ENCODE measurements at regions of chr11 and their contacts with region 1.

Region 1: GRCh38 chr11:82900277-82901164 is at the start of gene PRCP:
- DNase-seq: peak; percentile 90 to 98 (median 94)
- H3K4me3 ChIP-seq: peak within 1 kb of the TSS; percentile 67 to 82
- H3K4me3 Mint-ChIP-seq: peak within 1 kb of the TSS; percentile 95 to 100 (median 98)
- H3K27ac ChIP-seq: peak within 1 kb of the TSS; percentile 92
- H3K27ac Mint-ChIP-seq: peak within 1 kb of the TSS; percentile 95 to 100 (median 100)
- H3K4me1 ChIP-seq: peaks cover 29% of the 10 kb centered on the region
- H3K4me1 Mint-ChIP-seq: peaks cover 14 to 40% (median 34%) of the 10 kb centered on the region in 4 donors
- H3K27me3 ChIP-seq: no peaks in the 10 kb centered on the region
- H3K27me3 Mint-ChIP-seq: no peaks in the 10 kb centered on the region
- total RNA-seq, gene PRCP: 24.1 to 28.0 TPM

Region 2: DNA sequence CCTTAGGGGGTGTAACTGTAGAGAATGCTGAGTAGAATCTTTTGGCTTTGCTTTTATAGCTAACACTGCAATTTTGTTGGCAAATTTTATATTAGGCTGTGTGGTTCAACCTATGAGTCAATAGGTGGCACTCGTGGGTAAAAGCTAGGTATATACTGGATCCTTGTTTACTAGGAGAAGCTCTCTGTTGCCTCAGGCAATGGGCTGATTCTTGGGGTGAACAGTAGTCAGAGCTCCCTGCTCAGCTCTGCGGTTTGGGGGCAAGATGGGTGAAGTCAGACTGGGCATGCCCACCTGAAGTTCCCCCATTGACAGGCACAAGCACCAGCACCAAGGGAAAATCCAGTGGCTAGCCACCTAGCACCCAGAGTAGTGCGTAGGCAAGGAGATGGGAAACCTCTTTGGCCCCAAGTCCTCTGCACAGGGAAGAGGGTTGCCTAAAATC is 405.5 kb before region 1 on chr11:
- CTCF ChIA-PET with region 1: no interaction called
- POLR2A ChIA-PET with region 1: no interaction called
- intact Hi-C with region 1: no loop called
- DNase-seq: no peak
- H3K4me3 ChIP-seq: no peak overlapping the region
- H3K4me3 Mint-ChIP-seq: no peak overlapping the region
- H3K27ac ChIP-seq: no peak overlapping the region
- H3K27ac Mint-ChIP-seq: no peak overlapping the region
- H3K4me1 ChIP-seq: no peaks in the 10 kb centered on the region
- H3K4me1 Mint-ChIP-seq: no peaks in the 10 kb centered on the region
- H3K27me3 ChIP-seq: no peaks in the 10 kb centered on the region
- H3K27me3 Mint-ChIP-seq: no peaks in the 10 kb centered on the region

Region 3: DNA sequence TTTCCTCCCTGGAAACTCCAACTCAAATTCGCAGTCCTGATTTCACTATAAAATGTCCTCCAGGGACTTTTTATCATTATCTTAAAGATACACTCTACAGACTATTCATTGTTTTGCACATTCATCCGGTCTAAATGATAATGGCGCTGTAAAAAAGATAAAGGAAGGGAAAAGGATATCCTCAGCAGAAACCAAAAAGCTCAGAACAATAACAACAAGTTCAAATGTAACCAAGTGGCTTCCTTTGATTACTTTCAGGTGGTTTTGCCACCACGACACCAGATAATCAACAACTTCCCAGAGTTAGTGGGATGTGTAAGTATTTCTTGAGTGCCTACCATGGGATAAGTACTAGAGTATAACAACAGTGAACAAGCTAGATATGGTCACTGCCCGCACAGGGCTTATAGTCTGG is 26.6 kb before region 1 on chr11:
- CTCF ChIA-PET with region 1: interaction called, 107 read pairs
- POLR2A ChIA-PET with region 1: interaction called, 21 read pairs
- intact Hi-C with region 1: loop called (anchors 2 kb)
- DNase-seq: peak in 4 of 5 donors; percentile 28 to 51 (median 36)
- H3K4me3 ChIP-seq: no peak overlapping the region
- H3K4me3 Mint-ChIP-seq: peak overlapping the region in 6 of 8 donors; percentile 49 to 73 (median 62)
- H3K27ac ChIP-seq: no peak overlapping the region
- H3K27ac Mint-ChIP-seq: peak overlapping the region; percentile 33 to 85 (median 70)
- H3K4me1 ChIP-seq: peaks cover 24% of the 10 kb centered on the region
- H3K4me1 Mint-ChIP-seq: peaks cover 32 to 48% (median 35%) of the 10 kb centered on the region in 4 donors
- H3K27me3 ChIP-seq: no peaks in the 10 kb centered on the region
- H3K27me3 Mint-ChIP-seq: no peaks in the 10 kb centered on the region

Region 4: DNA sequence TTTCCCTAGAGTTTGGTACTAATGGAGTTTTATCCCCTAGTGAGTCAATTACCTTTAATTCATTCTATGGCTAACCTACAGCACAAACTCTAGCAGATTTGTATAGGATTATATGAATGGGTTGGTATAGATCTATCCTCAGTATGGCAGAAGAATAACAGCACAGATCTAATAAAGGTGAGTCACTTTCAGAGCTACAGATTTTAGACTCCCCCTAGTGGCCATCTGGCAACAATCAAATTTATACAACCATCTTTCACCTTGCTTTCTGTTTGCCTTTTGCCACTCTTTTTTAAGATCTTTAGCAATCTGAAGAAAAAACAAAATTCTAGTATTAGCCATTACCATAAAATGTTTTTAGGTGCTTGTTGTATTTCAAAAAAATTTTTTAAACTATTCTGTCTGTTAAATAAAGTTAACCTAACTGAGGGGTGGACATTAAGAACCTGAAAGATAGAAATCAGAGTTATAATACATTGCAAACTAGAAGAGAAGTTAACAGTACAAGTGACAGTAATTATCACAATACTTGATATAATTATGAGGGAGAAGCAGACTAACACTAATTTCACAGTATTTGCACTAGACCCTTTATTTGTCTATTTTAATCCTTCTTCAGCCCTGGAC is 26.8 kb after region 1 on chr11:
- CTCF ChIA-PET with region 1: interaction called, 11 read pairs
- POLR2A ChIA-PET with region 1: interaction called, 5 read pairs
- intact Hi-C with region 1: no loop called
- DNase-seq: peak; percentile 50 to 71 (median 65)
- H3K4me3 ChIP-seq: no peak overlapping the region
- H3K4me3 Mint-ChIP-seq: no peak overlapping the region
- H3K27ac ChIP-seq: no peak overlapping the region
- H3K27ac Mint-ChIP-seq: peak overlapping the region in 2 of 7 donors; percentile 2 to 57
- H3K4me1 ChIP-seq: peaks cover 8% of the 10 kb centered on the region
- H3K4me1 Mint-ChIP-seq: peaks cover 16 to 22% (median 18%) of the 10 kb centered on the region in 4 donors
- H3K27me3 ChIP-seq: no peaks in the 10 kb centered on the region
- H3K27me3 Mint-ChIP-seq: no peaks in the 10 kb centered on the region

Region 5: DNA sequence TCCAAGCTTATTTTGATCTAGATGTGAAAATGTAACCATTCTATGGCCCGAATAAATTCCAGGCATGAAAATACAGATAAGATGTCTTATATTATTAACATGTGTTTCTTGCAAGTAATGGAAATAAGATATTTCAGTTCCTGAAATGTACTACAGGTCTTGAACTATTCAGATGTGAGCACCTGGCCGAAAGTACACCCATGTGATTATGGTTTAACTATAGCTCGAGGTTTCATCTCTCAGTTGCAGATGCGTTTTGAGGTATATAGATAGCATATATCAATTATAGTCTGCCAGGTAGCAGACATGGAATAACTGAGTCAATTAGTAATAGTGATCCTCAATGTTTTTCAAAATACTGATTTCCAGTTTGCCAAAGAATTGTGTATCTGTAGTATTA is 69.3 kb after region 1 on chr11:
- CTCF ChIA-PET with region 1: interaction called, 4 read pairs
- POLR2A ChIA-PET with region 1: interaction called, 14 read pairs
- intact Hi-C with region 1: no loop called
- DNase-seq: no peak
- H3K4me3 ChIP-seq: no peak overlapping the region
- H3K4me3 Mint-ChIP-seq: peak overlapping the region in 2 of 8 donors; percentile 2 to 43
- H3K27ac ChIP-seq: no peak overlapping the region
- H3K27ac Mint-ChIP-seq: no peak overlapping the region
- H3K4me1 ChIP-seq: peaks cover 7% of the 10 kb centered on the region
- H3K4me1 Mint-ChIP-seq: peaks cover 18 to 39% (median 19%) of the 10 kb centered on the region in 4 donors
- H3K27me3 ChIP-seq: no peaks in the 10 kb centered on the region
- H3K27me3 Mint-ChIP-seq: no peaks in the 10 kb centered on the region

Region 6: GRCh38 chr11:82981852-82982251 is 81.3 kb after region 1 on chr11:
- CTCF ChIA-PET with region 1: no interaction called
- POLR2A ChIA-PET with region 1: no interaction called
- intact Hi-C with region 1: no loop called
- DNase-seq: no peak
- H3K4me3 ChIP-seq: no peak overlapping the region
- H3K4me3 Mint-ChIP-seq: no peak overlapping the region
- H3K27ac ChIP-seq: no peak overlapping the region
- H3K27ac Mint-ChIP-seq: no peak overlapping the region
- H3K4me1 ChIP-seq: no peaks in the 10 kb centered on the region
- H3K4me1 Mint-ChIP-seq: peaks cover 10 to 11% (median 11%) of the 10 kb centered on the region in 4 donors
- H3K27me3 ChIP-seq: no peaks in the 10 kb centered on the region
- H3K27me3 Mint-ChIP-seq: no peaks in the 10 kb centered on the region

Region 7: GRCh38 chr11:83071567-83072349 is 171.2 kb after region 1 on chr11 and contains the start of gene RAB30:
- CTCF ChIA-PET with region 1: no interaction called
- POLR2A ChIA-PET with region 1: interaction called, 24 read pairs
- intact Hi-C with region 1: loop called (anchors 1 kb)
- DNase-seq: peak; percentile 94 to 99 (median 96)
- H3K4me3 ChIP-seq: peak within 1 kb of the TSS; percentile 89 to 91
- H3K4me3 Mint-ChIP-seq: no peak within 1 kb of the TSS
- H3K27ac ChIP-seq: peak within 1 kb of the TSS; percentile 97
- H3K27ac Mint-ChIP-seq: no peak within 1 kb of the TSS
- H3K4me1 ChIP-seq: peaks cover 60% of the 10 kb centered on the region
- H3K4me1 Mint-ChIP-seq: peaks cover 6 to 39% (median 24%) of the 10 kb centered on the region in 4 donors
- H3K27me3 ChIP-seq: no peaks in the 10 kb centered on the region
- H3K27me3 Mint-ChIP-seq: no peaks in the 10 kb centered on the region
- total RNA-seq, gene RAB30: 12.3 to 14.1 TPM

Region 8: DNA sequence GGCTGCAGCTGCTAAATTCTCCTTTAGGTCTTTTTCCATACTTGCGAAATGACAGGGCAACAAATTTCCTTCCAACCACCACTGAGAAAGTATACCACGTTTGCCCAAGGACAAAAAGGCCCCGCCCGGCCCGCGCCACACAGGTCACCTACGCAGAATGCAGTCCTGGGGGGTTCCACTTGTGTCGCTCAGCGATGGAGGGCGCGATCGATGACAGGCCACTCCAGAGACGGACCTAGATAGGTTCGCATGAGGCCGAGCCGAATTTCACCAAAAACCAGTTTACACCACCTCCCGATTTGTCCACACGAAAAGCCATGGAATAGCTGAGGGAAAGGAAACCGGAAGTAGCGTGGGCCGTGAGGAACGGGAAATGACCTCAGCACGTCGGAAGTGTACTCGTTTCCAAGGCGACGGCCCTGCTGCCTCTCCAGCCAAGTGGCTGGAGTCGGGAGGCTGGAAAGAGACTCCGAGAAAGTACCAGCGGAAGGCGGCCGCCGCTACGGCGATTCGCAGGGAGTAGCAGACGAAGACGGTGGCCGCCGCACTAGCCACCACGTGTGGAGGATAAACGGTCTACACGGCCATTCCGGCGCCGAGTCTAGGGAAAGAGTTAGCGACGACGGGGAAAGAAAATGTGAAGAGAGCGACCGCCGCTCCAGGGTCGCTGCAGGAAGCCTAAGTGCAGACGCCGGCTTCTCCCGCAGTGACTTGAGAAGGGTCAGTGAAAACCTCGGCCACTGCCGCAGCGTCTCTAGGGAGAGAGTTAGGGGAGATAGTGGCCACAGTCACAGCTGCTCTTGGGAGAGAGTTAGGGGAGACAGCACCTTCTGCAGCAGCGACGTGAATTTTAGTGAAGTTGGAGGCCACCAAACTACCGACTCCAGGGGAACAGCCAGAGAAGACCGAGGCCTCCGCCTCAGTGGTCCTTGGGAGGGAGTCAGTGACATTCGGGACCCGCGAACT is 293.1 kb after region 1 on chr11 and contains the start of gene ANKRD42:
- CTCF ChIA-PET with region 1: interaction called, 3 read pairs
- POLR2A ChIA-PET with region 1: interaction called, 31 read pairs
- intact Hi-C with region 1: loop called (anchors 1 kb)
- DNase-seq: peak; percentile 88 to 92 (median 90)
- H3K4me3 ChIP-seq: peak within 1 kb of the TSS; percentile 90 to 99
- H3K4me3 Mint-ChIP-seq: peak within 1 kb of the TSS; percentile 98 to 100 (median 99)
- H3K27ac ChIP-seq: peak within 1 kb of the TSS; percentile 99
- H3K27ac Mint-ChIP-seq: peak within 1 kb of the TSS; percentile 99 to 100 (median 100)
- H3K4me1 ChIP-seq: peaks cover 39% of the 10 kb centered on the region
- H3K4me1 Mint-ChIP-seq: peaks cover 35 to 53% (median 41%) of the 10 kb centered on the region in 4 donors
- H3K27me3 ChIP-seq: no peaks in the 10 kb centered on the region
- H3K27me3 Mint-ChIP-seq: no peaks in the 10 kb centered on the region
- total RNA-seq, gene ANKRD42: 8.9 to 12.4 TPM

Region 9: GRCh38 chr11:83285771-83286528 is 385.4 kb after region 1 on chr11 and contains the start of gene CCDC90B:
- CTCF ChIA-PET with region 1: interaction called, 16 read pairs
- POLR2A ChIA-PET with region 1: interaction called, 72 read pairs
- intact Hi-C with region 1: loop called (anchors 1 kb)
- DNase-seq: peak; percentile 95 to 97 (median 97)
- H3K4me3 ChIP-seq: peak within 1 kb of the TSS; percentile 89 to 92
- H3K4me3 Mint-ChIP-seq: peak within 1 kb of the TSS; percentile 94 to 99 (median 98)
- H3K27ac ChIP-seq: peak within 1 kb of the TSS; percentile 95
- H3K27ac Mint-ChIP-seq: peak within 1 kb of the TSS; percentile 98 to 100 (median 100)
- H3K4me1 ChIP-seq: peaks cover 42% of the 10 kb centered on the region
- H3K4me1 Mint-ChIP-seq: peaks cover 26 to 46% (median 34%) of the 10 kb centered on the region in 4 donors
- H3K27me3 ChIP-seq: no peaks in the 10 kb centered on the region
- H3K27me3 Mint-ChIP-seq: no peaks in the 10 kb centered on the region
- total RNA-seq, gene CCDC90B: 37.6 to 38.0 TPM